ENCODE measurements at regions of chr7 and their contacts with region 1.

Region 1: DNA sequence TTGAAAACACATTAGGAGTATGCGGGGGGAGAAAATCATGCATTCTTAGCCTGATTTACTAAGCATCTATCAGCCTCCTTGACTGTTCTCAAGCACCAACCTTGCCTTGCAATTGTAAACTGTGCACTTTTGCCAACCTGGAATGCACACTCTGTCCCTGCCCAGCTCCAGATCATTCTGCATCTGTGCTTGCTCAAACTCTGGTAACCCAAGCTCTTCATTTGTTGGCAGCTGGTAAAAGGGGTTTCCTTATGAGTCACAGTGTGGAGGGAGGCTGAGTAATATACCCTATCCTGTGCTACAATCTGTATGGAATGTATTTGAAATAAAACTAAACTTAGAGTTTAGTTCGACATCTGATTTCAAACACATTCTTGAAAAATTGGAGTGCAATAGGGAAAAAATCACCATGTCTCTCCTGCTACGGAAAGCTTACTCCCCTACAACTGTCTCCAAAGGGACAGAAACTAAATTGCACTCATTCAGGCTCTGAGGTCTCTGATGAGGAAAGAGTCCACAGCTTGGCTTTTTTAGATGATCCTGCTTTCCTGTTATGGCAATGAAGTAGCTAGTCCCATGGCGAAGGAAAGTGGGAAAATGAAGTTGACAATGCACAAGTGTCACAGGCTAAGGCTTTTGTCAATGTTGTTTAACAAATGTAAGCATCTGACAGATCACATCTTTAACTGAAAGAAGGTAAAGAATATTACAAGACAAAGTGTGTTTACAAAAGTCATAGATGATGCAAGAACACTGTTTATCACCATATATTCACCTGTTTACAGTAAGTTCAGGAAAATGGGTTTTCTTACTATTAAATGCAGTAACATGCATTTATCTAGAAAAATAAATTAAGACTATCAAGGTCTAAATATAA is 61.9 kb downstream of the TES start:
- DNase-seq: peak; percentile 76 to 83
- ATAC-seq: peak; percentile 100
- H3K4me3 ChIP-seq: peak overlapping the region in 3 of 4 donors; percentile 19 to 41 (median 33)
- H3K27ac ChIP-seq: peak overlapping the region; percentile 79 to 90 (median 86)
- H3K4me1 ChIP-seq: peaks cover 27 to 48% of the 10 kb centered on the region in 2 donors
- H3K27me3 ChIP-seq: no peaks in the 10 kb centered on the region
- CTCF ChIP-seq: no peak
- POLR2A ChIP-seq: no peak

Region 2: DNA sequence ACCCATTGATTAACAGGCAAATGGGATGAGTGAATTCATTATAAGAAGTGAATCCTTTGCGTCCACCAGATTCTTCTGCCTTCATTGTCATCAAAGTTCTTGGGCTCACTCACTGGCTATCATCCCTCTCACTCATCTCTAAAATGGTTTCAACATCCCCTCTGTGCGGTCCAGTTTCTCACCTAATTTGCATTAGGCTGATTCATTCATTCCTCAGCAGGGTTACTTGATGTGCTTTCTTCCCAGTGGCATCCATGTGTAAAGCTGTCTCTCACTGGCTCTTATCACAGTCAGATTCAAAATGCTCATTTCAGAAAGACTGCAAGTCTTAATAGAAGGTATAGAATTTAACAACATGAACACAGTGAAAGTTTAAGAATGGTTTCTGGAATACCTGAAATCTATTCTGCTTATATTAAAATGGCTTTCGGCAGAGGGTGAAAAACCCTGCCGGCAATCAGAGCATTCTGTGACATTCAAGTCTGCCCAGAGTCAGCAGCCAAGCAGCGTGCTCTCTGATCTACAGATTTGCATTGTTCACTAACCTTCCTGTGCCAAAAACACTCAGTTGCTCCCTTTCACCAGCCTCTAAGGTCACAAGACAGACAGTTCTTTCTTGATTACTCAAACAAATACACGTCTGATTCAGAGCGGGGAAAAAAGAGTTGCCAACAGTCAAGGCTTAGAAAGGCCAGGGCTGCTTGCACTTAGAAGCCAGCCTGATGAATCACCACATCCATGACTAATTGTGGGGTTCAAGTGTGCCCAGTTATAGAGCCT is 44.8 kb after region 1 on chr7:
- in situ Hi-C with region 1: no loop called
- intact Hi-C with region 1: loop called (anchors 5 kb)
- DNase-seq: peak; percentile 59 to 62
- ATAC-seq: peak; percentile 98
- H3K4me3 ChIP-seq: peak overlapping the region in 1 of 4 donors; percentile 2
- H3K27ac ChIP-seq: peak overlapping the region; percentile 66 to 85 (median 72)
- H3K4me1 ChIP-seq: peaks cover 9 to 23% of the 10 kb centered on the region in 2 donors
- H3K27me3 ChIP-seq: no peaks in the 10 kb centered on the region
- CTCF ChIP-seq: no peak
- POLR2A ChIP-seq: no peak

Region 3: GRCh38 chr7:117202511-117202910 is 930.3 kb after region 1 on chr7:
- in situ Hi-C with region 1: no loop called
- intact Hi-C with region 1: no loop called
- DNase-seq: no peak
- ATAC-seq: no peak
- H3K4me3 ChIP-seq: no peak overlapping the region
- H3K27ac ChIP-seq: no peak overlapping the region
- H3K4me1 ChIP-seq: no peaks in the 10 kb centered on the region
- H3K27me3 ChIP-seq: no peaks in the 10 kb centered on the region
- CTCF ChIP-seq: no peak
- POLR2A ChIP-seq: no peak

Measured in gastrocnemius medialis (tissue), 4 donors.